ENCODE measurements at regions of chr11 and their contacts with region 1.

Region 1: DNA sequence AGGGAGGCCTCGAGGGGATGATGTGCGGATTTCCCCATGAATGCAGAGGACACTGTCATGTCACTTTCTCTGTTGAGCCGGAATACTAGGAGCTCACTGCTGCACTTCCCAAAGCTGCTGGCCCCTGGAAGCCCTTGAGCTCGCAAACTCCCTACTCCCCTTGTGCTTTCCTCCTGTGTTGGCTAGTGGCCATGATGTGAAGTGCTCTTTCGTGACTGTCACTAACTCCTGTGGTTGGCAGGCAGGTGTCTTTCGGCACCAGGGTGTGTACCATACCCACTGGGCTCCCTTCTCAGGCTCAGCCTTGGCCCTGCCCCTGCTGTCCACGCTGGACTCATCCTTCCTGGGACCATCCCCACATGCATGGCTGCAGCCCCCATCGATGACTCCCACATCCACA is 86.2 kb downstream of the BTBD10 start:
- DNase-seq: peak in 1 of 3 donors; percentile 30
- ATAC-seq: peak in 1 of 2 donors; percentile 24
- H3K4me3 ChIP-seq: no peak overlapping the region
- H3K27ac ChIP-seq: no peak overlapping the region
- H3K4me1 ChIP-seq: no peaks in the 10 kb centered on the region
- H3K27me3 ChIP-seq: no peaks in the 10 kb centered on the region

Region 2: GRCh38 chr11:13462901-13463778 is 86.3 kb after region 1 on chr11 and contains the start of gene BTBD10:
- intact Hi-C with region 1: loop called in 1 of 4 experiments (anchors 10 kb)
- DNase-seq: peak; percentile 95 to 98 (median 97)
- ATAC-seq: peak; percentile 99
- H3K4me3 ChIP-seq: peak within 1 kb of the TSS; percentile 59
- H3K27ac ChIP-seq: peak within 1 kb of the TSS; percentile 82
- H3K4me1 ChIP-seq: no peaks in the 10 kb centered on the region
- H3K27me3 ChIP-seq: no peaks in the 10 kb centered on the region
- total RNA-seq, gene BTBD10: 22.4 to 29.7 (median 24.4) TPM